Endothelial cell of umbilical vein (primary cell): ENCODE measurements at regions of chr1 and their contacts with region 1.

Region 1: GRCh38 chr1:19130468-19130867 is 79.6 kb downstream of the UBR4 start:
- DNase-seq: no peak
- H3K4me3 ChIP-seq: no peak overlapping the region
- H3K27ac ChIP-seq: no peak overlapping the region
- H3K4me1 ChIP-seq: no peaks in the 10 kb centered on the region
- H3K27me3 ChIP-seq: no peaks in the 10 kb centered on the region
- CTCF ChIP-seq: no peak
- POLR2A ChIP-seq: no peak

Region 2: GRCh38 chr1:19169642-19170041 is 39.2 kb after region 1 on chr1:
- CTCF ChIA-PET with region 1: interaction called, 6 read pairs
- POLR2A ChIA-PET with region 1: no interaction called
- dilution Hi-C with region 1: no loop called
- intact Hi-C with region 1: loop called (anchors 5 kb)
- DNase-seq: no peak
- H3K4me3 ChIP-seq: no peak overlapping the region
- H3K27ac ChIP-seq: no peak overlapping the region
- H3K4me1 ChIP-seq: no peaks in the 10 kb centered on the region
- H3K27me3 ChIP-seq: no peaks in the 10 kb centered on the region
- CTCF ChIP-seq: no peak
- POLR2A ChIP-seq: no peak